ENCODE measurements at regions of chr7 and their contacts with region 1.

Region 1: DNA sequence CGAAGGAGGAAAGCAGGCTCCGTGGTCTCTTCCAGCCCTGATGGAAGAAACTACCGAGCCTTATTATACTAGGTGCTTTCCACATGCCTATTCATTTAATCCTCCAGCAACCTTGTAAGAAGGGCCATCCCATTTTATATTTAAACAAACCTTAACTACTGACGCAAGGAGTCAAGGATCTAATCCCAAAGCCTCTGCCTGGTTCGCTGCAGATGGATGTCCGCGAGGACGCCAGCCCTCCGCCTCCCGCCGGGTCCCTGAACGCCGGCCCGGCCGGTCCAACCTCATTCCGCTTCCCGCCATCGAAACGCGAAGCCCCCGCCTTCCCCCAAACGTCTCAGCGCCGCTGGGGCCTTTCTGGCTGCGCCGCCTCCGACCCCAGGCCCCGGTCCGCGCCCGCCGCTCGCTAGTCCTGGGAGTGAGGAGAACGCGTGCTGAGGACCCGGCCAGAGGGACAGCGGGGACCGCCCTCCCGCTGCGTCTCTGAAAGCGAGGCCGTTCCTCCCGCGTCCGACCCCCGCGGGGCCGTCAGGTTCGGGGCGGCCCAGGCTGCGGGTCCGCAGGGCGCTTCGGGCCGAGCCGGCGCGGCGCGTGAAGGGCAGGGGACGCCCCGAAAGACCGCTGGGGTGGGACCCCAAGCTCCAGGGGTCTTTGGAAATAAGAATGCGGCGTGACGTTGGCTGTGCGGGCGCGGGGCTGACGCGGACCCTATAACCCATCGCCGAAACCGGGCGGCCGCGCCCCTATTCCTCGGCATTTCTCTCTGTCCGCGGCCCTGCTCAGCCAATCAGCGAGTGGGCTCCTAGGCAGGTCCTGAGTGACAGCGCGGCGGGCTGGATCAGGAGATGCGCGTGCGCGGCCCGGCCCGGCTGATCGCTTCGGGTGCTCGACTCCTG is at the start of gene ATP6V0E2:
- DNase-seq: peak; percentile 97
- ATAC-seq: peak; percentile 95
- total RNA-seq, gene ATP6V0E2: 125 TPM

Region 2: DNA sequence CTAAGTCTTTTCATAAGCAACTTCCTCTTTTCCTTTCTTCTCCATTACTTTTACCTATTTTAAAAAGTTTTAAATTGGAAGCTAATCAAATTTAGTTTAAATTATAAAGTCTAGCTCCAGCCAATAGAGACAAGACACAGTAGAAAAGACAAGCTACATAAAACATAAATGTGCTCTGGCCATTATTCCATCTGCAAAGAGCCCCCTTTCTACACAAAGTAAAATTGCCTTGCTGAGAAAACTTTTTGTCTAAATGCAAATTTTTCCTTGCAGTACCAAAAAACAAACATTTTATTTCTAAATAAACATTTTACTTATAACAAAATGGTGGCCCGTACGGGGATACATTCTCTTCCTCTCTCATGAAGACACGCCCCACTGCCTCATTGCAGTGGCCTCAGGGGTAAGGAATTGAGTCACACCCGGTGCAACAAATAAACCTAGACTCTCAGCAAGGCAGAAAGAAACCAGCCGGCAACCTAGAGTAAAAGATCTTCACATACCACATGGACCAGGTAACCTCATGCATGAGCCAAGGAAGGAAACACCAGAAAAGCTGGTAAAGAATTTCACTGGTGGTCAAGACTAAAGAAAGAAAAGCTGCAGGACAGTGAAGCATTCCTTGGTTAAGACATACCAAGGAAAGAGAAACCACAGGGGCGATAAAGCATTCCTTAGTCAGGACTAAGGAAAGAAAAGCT is 304.1 kb before region 1 on chr7:
- intact Hi-C with region 1: no loop called
- DNase-seq: no peak
- ATAC-seq: no peak

Region 3: GRCh38 chr7:149771721-149772240 is 101.5 kb before region 1 on chr7:
- intact Hi-C with region 1: loop called (anchors 5 kb)
- DNase-seq: peak; percentile 96
- ATAC-seq: peak; percentile 96

Region 4: DNA sequence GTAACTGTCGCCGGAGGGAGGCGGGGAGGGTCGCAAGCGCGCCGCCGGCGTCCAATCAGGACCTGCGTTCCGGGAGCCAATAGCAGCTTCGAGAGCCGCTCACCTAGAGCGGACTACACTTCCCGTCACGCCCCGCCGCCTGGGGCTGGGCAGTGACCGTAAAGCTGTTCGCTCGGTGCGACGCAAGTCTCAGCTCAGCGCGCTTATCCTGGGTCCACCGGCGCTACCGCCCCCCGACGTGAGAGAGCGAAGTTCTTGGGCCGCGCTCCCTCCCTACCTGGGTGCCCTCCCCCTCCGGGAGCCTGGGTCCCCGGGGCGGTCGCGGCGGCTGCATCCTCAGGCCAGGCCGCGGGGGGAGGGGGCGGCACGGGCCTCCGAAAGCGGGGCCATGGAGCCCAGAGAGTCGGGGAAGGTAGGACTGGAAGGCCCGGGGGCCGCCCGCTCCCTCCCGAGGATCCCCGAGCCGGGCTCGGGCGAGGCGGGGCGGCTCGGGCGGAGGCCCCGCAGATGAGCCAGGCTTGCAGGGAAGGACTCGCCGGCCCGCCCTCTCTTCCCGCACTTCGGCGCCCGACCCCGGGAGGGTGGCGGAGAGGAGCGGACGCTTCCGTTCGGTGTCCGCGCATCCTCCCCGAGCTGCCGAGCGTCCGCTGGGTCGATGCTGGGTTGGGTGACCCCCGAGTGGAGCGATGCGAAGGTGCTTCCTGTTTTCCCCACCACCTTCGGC is 34.9 kb before region 1 on chr7 and contains the start of gene ZNF862:
- intact Hi-C with region 1: loop called (anchors 2 kb)
- DNase-seq: peak; percentile 99
- ATAC-seq: peak; percentile 99
- total RNA-seq, gene ZNF862: 10.1 TPM